Left ventricle myocardium superior (tissue), 1 donor: ENCODE measurements at regions of chr1 and their contacts with region 1.

Region 1: DNA sequence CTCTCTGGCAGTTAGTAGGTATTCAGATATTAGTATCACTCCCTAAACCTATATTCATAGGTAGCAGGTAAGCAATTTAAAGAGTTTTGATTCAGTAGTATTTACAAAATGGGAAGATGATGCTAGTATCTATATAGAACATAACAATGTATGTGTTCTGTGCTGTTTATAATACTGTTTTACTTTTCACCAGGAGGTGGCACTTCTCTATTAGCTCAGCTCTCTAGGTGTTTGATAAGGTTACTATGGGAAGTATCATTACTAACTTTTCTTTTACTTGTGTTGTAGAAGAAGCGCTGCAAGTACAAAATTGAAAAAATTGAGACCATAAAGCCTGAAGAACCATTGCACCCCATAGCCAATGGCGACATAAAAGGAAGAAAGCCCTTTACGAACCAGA is 49.4 kb upstream of the FASLG start:
- DNase-seq: no peak
- ATAC-seq: peak; percentile 52

Region 2: GRCh38 chr1:172515927-172516326 is 93.6 kb before region 1 on chr1:
- intact Hi-C with region 1: no loop called
- DNase-seq: no peak
- ATAC-seq: no peak

Region 3: DNA sequence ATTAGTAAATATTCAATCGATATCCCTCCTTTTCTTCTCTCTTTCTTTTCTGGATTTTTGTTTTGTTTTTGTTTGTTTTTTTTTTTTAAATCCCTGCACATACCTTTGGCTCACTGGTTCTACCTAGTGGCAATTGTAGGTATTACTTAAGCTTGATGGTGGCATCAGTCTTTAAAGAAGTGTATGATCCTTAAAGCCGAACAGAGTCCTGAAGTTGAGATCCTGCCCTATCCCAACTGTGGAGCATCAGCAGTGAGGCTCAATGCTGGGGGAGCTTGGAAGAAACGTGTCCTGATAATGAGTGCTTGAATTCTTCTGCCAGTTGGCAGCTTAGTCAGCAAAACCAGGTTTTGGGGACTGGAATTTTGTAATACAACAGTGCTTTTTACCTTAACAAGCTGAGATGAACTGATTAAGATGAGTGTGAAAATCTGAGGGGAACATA is 110.2 kb after region 1 on chr1:
- intact Hi-C with region 1: loop called (anchors 5 kb)
- DNase-seq: no peak
- ATAC-seq: peak; percentile 51